Dorsolateral prefrontal cortex (tissue), 120 donors: ENCODE measurements at regions of chr3 and their contacts with region 1.

Region 1: GRCh38 chr3:127822698-127823425 is 547 bp upstream of the MGLL start:
- DNase-seq: peak in 5 of 10 donors; percentile 36 to 68 (median 62)
- H3K4me3 ChIP-seq: peak overlapping the region; percentile 54 to 89 (median 79)
- H3K27ac ChIP-seq: peak overlapping the region in 58 of 59 donors; percentile 21 to 94 (median 87)
- H3K27me3 ChIP-seq: no peaks in the 10 kb centered on the region
- CTCF ChIP-seq: peak in 16 of 56 donors; percentile 5 to 51 (median 29)

Region 2: GRCh38 chr3:127590593-127591477 is 232.0 kb before region 1 on chr3 and contains the start of gene TPRA1:
- intact Hi-C with region 1: loop called (anchors 5 to 10 kb)
- DNase-seq: peak; percentile 64 to 95 (median 90)
- H3K4me3 ChIP-seq: peak within 1 kb of the TSS; percentile 54 to 99 (median 92)
- H3K27ac ChIP-seq: peak within 1 kb of the TSS; percentile 58 to 96 (median 88)
- H3K27me3 ChIP-seq: no peaks in the 10 kb centered on the region
- CTCF ChIP-seq: peak in 42 of 56 donors; percentile 4 to 65 (median 36)
- total RNA-seq, gene TPRA1: 19.2 to 39.2 (median 24.6) TPM

Region 3: GRCh38 chr3:127690823-127691452 is 131.9 kb before region 1 on chr3:
- intact Hi-C with region 1: loop called (anchors 5 kb)
- DNase-seq: peak in 4 of 10 donors; percentile 43 to 47 (median 44)
- H3K4me3 ChIP-seq: no peak overlapping the region
- H3K27ac ChIP-seq: peak overlapping the region in 53 of 59 donors; percentile 14 to 90 (median 75)
- H3K27me3 ChIP-seq: no peaks in the 10 kb centered on the region
- CTCF ChIP-seq: peak in 50 of 56 donors; percentile 10 to 58 (median 40)

Region 4: DNA sequence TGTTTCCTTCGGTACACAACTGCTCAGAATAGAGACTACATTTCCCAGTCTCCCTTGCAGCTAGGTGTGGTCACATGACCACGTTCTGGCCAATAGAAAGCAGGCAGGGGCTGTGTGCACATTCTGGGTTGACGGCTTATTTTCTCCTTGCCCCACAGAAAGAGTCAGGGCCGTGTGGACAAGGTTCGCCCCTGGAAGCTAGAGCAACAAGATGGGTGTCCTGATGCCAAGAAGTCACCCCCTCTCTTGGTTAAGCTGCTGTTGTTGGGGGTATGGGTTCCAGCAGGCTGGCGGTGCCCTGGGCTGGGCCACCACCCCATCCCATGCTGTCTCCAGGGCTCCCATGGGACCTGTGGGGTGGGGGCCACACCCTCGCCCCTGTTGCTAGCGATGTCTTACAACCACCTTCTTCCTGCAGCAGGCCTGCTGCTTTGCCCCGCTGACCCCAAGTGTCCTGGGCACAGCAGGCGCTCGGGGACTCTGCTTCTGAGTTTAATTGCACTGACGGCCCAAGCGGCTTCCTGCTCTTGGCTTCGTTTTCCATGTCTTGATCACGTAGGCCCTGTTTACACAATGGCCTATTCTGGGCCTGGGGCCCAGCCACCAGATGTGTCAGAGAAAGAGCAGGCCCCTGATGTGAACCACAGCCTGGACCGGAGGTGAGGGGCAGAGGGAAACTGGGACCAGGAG is 125.2 kb before region 1 on chr3:
- intact Hi-C with region 1: loop called (anchors 5 kb)
- DNase-seq: peak; percentile 76 to 92 (median 82)
- H3K4me3 ChIP-seq: peak overlapping the region in 58 of 59 donors; percentile 11 to 68 (median 46)
- H3K27ac ChIP-seq: peak overlapping the region; percentile 71 to 97 (median 91)
- H3K27me3 ChIP-seq: no peaks in the 10 kb centered on the region
- CTCF ChIP-seq: peak in 8 of 56 donors; percentile 5 to 26 (median 18)

Region 5: GRCh38 chr3:127786353-127787070 is 36.4 kb before region 1 on chr3:
- intact Hi-C with region 1: loop called in 1 of 2 experiments (anchors 5 kb)
- DNase-seq: peak; percentile 69 to 97 (median 86)
- H3K4me3 ChIP-seq: peak overlapping the region in 12 of 59 donors; percentile 2 to 31 (median 16)
- H3K27ac ChIP-seq: peak overlapping the region in 58 of 59 donors; percentile 46 to 96 (median 86)
- H3K27me3 ChIP-seq: no peaks in the 10 kb centered on the region
- CTCF ChIP-seq: no peak

Region 6: GRCh38 chr3:127857333-127857732 is 34.5 kb after region 1 on chr3:
- intact Hi-C with region 1: no loop called
- DNase-seq: no peak
- H3K4me3 ChIP-seq: no peak overlapping the region
- H3K27ac ChIP-seq: no peak overlapping the region
- H3K27me3 ChIP-seq: no peaks in the 10 kb centered on the region
- CTCF ChIP-seq: peak in 18 of 56 donors; percentile 8 to 35 (median 22)

Region 7: DNA sequence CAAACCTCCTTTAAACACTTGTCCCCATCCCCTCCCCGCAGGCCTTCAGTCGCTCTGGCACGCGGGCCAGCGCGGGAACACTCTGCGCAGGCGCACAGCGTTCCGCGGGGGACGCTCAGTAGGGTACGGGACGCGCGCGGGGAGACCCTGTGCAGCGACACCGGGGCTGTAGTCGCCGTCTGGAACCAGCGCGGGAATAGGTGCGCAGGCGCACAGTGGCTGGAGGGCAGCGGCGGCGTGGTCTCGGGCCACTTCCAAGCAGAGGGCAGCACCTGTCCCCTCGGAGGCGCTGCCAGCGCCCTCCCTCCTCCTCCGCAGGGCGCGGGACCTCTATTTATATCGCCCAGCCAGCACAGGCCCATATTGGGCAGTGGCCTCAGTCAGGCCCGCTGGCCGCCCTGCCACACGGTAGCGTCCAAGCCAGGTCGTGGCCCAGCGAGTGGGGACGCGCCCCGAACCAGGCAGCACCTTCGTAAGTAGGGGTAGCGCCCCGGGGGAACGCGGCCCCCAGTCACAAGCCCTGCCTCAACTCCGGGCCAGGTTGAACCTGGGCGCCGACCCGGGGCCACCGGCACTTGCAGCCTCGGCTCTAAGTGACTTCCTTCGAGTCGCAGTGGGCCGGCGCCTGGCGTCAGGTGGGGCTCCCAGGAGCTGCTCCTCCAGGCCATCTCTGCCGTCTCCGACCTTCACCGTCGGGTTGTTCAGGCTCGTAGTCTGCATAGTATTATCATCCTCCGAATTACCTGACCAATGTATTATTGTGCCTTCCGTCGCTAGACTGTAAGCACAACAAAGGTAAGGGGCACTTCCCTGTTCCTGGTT is 92.5 kb after region 1 on chr3 and contains the start of gene KBTBD12:
- intact Hi-C with region 1: loop called in 1 of 2 experiments (anchors 10 kb)
- DNase-seq: peak in 8 of 10 donors; percentile 35 to 78 (median 54)
- H3K4me3 ChIP-seq: peak within 1 kb of the TSS; percentile 32 to 80 (median 63)
- H3K27ac ChIP-seq: peak within 1 kb of the TSS in 56 of 59 donors; percentile 4 to 92 (median 76)
- H3K27me3 ChIP-seq: peaks cover 0 to 4% (median 0%) of the 10 kb centered on the region in 45 donors
- CTCF ChIP-seq: peak in 3 of 56 donors; percentile 8 to 14 (median 11)
- total RNA-seq, gene KBTBD12: 3.7 to 16.3 (median 8.3) TPM

Region 8: DNA sequence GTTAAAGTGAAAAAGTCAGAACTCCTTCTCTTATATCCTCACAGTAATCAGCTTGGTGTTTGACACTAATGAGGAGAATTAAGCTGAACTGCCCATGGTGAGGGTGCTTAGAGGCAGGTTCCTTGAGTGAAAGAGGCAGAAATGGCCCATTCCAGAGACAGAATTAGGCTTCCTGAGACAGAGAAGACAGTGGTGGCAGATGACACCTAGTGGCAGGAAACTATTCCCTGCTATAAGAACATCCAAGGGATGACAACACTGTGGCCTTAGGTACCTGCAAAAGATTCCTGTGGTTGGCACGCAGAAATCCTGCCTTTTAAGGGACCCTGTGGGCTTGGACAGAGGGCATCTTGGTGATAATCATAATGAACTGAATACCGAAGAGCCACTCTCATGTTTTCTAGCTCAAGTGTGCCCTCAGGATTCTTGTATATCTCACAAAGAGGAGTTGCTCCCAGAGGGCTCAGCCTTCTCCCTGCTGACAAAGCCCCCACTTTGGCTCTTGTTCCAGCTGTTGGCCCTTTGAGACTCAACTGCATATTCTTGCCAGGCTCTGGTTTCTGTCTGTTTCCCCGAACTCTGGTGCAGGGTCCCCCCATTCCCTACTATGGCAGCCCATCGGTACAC is 148.2 kb after region 1 on chr3:
- intact Hi-C with region 1: no loop called
- DNase-seq: peak in 4 of 10 donors; percentile 18 to 65 (median 55)
- H3K4me3 ChIP-seq: no peak overlapping the region
- H3K27ac ChIP-seq: no peak overlapping the region
- H3K27me3 ChIP-seq: no peaks in the 10 kb centered on the region
- CTCF ChIP-seq: peak; percentile 58 to 85 (median 74)

Region 9: DNA sequence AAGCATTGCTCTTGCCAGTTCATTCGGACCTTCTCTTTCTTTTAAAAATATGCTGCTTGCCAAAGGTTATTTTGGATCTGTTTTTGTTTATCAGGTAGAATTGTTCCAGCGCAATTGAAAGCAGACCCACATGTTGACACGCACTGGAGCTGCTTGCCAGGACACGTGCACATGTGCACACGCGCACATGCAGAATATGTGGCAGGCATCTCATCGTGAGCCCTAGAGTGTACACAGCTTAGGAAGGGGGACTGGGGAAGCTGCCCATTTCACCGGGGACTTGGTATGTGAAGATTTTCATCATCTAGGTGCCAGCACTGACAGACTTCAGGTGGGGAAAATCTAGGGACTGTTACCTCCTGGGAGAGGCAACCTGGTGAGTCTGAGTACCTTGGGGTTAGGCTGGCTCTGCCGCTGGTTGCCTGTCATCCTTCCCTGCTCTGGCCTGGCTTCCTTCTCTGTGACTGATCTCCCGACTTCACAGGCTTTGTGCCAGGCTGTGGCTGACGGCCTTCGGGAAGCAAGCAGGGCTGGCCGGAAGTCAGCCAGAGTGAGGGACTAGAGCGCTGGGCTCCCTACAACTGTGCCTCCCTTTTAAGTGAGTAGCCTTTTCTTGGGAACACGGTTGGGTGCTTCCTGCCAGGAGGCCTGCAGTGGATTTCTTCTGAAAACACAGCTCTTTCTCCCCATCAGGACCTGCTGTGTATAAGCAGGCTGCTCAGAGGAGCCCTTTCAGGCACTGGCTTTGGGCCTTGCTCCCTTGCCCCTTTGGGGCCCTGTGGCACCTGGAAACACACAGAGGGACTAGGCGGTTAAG is 459.7 kb after region 1 on chr3:
- intact Hi-C with region 1: no loop called
- DNase-seq: peak in 2 of 10 donors; percentile 9 to 38
- H3K4me3 ChIP-seq: no peak overlapping the region
- H3K27ac ChIP-seq: peak overlapping the region in 17 of 59 donors; percentile 0 to 68 (median 41)
- H3K27me3 ChIP-seq: no peaks in the 10 kb centered on the region
- CTCF ChIP-seq: no peak